ENCODE measurements at regions of chr3 and their contacts with region 1.

Region 1: GRCh38 chr3:157865352-157866000 is 240.7 kb downstream of the SHOX2 start:
- DNase-seq: peak; percentile 1
- ATAC-seq: peak; percentile 99
- H3K4me3 ChIP-seq: no peak overlapping the region
- H3K27ac ChIP-seq: no peak overlapping the region
- H3K4me1 ChIP-seq: no peaks in the 10 kb centered on the region
- H3K27me3 ChIP-seq: no peaks in the 10 kb centered on the region
- CTCF ChIP-seq: peak; percentile 84 to 92 (median 85)
- EP300 ChIP-seq: no peak
- POLR2A ChIP-seq: no peak
- RAD21 ChIP-seq: peak; percentile 92

Region 2: GRCh38 chr3:158420654-158421396 is 555.3 kb after region 1 on chr3:
- CTCF ChIA-PET with region 1: no interaction called
- POLR2A ChIA-PET with region 1: no interaction called
- RAD21 ChIA-PET with region 1: interaction called, 3 read pairs
- SMC1A ChIA-PET with region 1: interaction called, 10 read pairs
- in situ Hi-C with region 1: no loop called
- intact Hi-C with region 1: no loop called
- DNase-seq: peak; percentile 71
- ATAC-seq: peak; percentile 91
- H3K4me3 ChIP-seq: no peak overlapping the region
- H3K27ac ChIP-seq: peak overlapping the region; percentile 66
- H3K4me1 ChIP-seq: peaks cover 13% of the 10 kb centered on the region
- H3K27me3 ChIP-seq: no peaks in the 10 kb centered on the region
- CTCF ChIP-seq: no peak
- EP300 ChIP-seq: peak; percentile 75 to 92
- POLR2A ChIP-seq: no peak
- RAD21 ChIP-seq: no peak

Region 3: GRCh38 chr3:158522221-158523136 is 657.0 kb after region 1 on chr3:
- CTCF ChIA-PET with region 1: no interaction called
- POLR2A ChIA-PET with region 1: no interaction called
- RAD21 ChIA-PET with region 1: no interaction called
- SMC1A ChIA-PET with region 1: interaction called, 5 read pairs
- in situ Hi-C with region 1: loop called (anchors 10 kb)
- intact Hi-C with region 1: no loop called
- DNase-seq: no peak
- ATAC-seq: no peak
- H3K4me3 ChIP-seq: no peak overlapping the region
- H3K27ac ChIP-seq: no peak overlapping the region
- H3K4me1 ChIP-seq: no peaks in the 10 kb centered on the region
- H3K27me3 ChIP-seq: no peaks in the 10 kb centered on the region
- CTCF ChIP-seq: no peak
- EP300 ChIP-seq: no peak
- POLR2A ChIP-seq: no peak
- RAD21 ChIP-seq: no peak

Region 4: GRCh38 chr3:158532099-158532734 is 666.7 kb after region 1 on chr3:
- CTCF ChIA-PET with region 1: interaction called, 28 read pairs
- POLR2A ChIA-PET with region 1: no interaction called
- RAD21 ChIA-PET with region 1: interaction called, 17 read pairs
- SMC1A ChIA-PET with region 1: interaction called, 14 read pairs
- in situ Hi-C with region 1: loop called (anchors 10 kb)
- intact Hi-C with region 1: loop called (anchors 1 kb)
- DNase-seq: no peak
- ATAC-seq: peak; percentile 62; the same call in 2 of the 3 replicates
- H3K4me3 ChIP-seq: no peak overlapping the region
- H3K27ac ChIP-seq: no peak overlapping the region
- H3K4me1 ChIP-seq: no peaks in the 10 kb centered on the region
- H3K27me3 ChIP-seq: no peaks in the 10 kb centered on the region
- CTCF ChIP-seq: peak; percentile 48 to 60 (median 49)
- EP300 ChIP-seq: no peak
- POLR2A ChIP-seq: no peak
- RAD21 ChIP-seq: peak; percentile 82